IMR-90 (cell line): ENCODE measurements at regions of chr2 and their contacts with region 1.

Region 1: GRCh38 chr2:28751252-28751955 is at the start of gene PPP1CB:
- DNase-seq: peak; percentile 96
- ATAC-seq: peak; percentile 92
- H3K4me3 ChIP-seq: peak within 1 kb of the TSS; percentile 93
- H3K27ac ChIP-seq: peak within 1 kb of the TSS; percentile 99
- H3K4me1 ChIP-seq: peaks cover 9% of the 10 kb centered on the region
- H3K27me3 ChIP-seq: no peaks in the 10 kb centered on the region
- CTCF ChIP-seq: peak; percentile 38
- POLR2A ChIP-seq: peak; percentile 72; the same call in 1 of the 2 replicates
- RAD21 ChIP-seq: peak; percentile 14; the same call in 1 of the 2 replicates
- total RNA-seq, gene PPP1CB: 111 and 271 TPM in 2 replicates

Region 2: DNA sequence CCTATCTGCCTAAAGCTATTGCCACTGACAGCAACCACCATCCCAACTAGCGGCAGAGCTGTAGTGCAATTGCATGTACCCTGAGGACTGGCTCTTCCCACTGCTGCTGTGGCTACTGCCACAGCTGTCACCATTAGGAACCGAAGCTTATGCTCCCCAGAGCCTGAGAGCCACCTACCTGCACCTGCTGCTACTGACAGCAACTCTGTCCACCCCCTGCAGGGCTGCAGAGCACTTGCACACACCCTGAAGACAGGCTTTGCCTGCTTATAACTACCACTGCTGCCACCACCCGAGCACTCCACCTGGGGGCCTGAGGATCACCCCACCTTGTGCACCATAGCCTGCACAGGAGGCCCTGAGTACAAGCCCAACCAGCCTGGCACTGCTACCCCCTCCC is 576.4 kb before region 1 on chr2:
- CTCF ChIA-PET with region 1: no interaction called
- POLR2A ChIA-PET with region 1: no interaction called
- dilution Hi-C with region 1: no loop called
- in situ Hi-C with region 1: no loop called
- intact Hi-C with region 1: no loop called
- DNase-seq: no peak
- ATAC-seq: no peak
- H3K4me3 ChIP-seq: no peak overlapping the region
- H3K27ac ChIP-seq: no peak overlapping the region
- H3K4me1 ChIP-seq: peaks cover 6% of the 10 kb centered on the region
- H3K27me3 ChIP-seq: no peaks in the 10 kb centered on the region
- CTCF ChIP-seq: no peak
- POLR2A ChIP-seq: no peak
- RAD21 ChIP-seq: no peak

Region 3: GRCh38 chr2:28566521-28567041 is 184.8 kb before region 1 on chr2:
- CTCF ChIA-PET with region 1: interaction called, 8 read pairs
- POLR2A ChIA-PET with region 1: no interaction called
- dilution Hi-C with region 1: no loop called
- in situ Hi-C with region 1: no loop called
- intact Hi-C with region 1: loop called (anchors 1 kb)
- DNase-seq: peak; percentile 72
- ATAC-seq: peak; percentile 98
- H3K4me3 ChIP-seq: peak overlapping the region; percentile 65
- H3K27ac ChIP-seq: peak overlapping the region; percentile 67
- H3K4me1 ChIP-seq: 0 out of 2 replicates have a peak, but pooled peaks cover 2% of the 10 kb centered on the region
- H3K27me3 ChIP-seq: no peaks in the 10 kb centered on the region
- CTCF ChIP-seq: peak; percentile 100
- POLR2A ChIP-seq: peak; percentile 54
- RAD21 ChIP-seq: peak; percentile 97

Region 4: DNA sequence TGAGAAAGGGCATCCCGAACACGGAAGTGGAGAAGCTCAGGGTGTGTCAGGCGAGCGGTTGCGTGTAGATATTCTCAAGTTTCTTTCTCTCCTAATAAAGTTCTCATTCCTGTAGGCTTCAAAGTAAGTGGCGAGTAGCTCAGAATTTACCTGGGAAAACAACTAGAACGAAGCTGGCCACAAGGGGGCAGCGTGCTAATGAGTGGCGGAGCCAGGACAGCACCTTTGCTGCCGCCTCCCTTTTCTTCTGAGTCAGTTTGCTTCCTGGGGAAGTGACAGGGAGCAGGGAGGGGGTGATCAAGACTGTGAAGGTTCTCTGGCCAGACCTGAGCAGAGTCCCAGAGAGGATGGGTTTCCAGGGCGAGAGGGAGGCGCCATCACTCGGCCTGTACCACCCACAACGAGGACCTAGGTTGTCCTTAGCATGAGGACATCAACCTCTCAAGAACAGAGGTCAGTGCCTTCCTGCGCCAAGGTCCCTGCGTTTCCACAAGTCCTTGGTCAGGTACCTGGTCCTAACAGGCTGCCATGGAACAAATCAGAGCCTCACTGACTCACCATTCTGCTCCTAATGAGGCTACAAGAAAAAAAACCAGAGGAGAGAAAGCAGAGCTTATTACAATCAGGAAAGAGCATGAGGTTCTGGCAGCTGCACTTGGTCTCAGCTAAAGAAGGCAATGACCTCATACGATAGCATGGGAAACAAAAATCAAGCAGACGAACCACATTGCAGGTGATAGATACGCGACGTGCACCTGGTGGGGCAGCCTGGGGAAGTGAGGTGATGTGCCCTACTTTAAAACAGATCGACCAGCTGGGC is 156.9 kb before region 1 on chr2:
- CTCF ChIA-PET with region 1: interaction called, 5 read pairs
- POLR2A ChIA-PET with region 1: no interaction called
- dilution Hi-C with region 1: no loop called
- in situ Hi-C with region 1: loop called (anchors 5 kb)
- intact Hi-C with region 1: loop called (anchors 1 kb)
- DNase-seq: peak; percentile 82
- ATAC-seq: peak; percentile 83
- H3K4me3 ChIP-seq: no peak overlapping the region
- H3K27ac ChIP-seq: peak overlapping the region; percentile 5; the same call in 1 of the 2 replicates
- H3K4me1 ChIP-seq: peaks cover 5% of the 10 kb centered on the region
- H3K27me3 ChIP-seq: no peaks in the 10 kb centered on the region
- CTCF ChIP-seq: peak; percentile 83
- POLR2A ChIP-seq: no peak
- RAD21 ChIP-seq: peak; percentile 88

Region 5: GRCh38 chr2:28681158-28681571 is 70.2 kb before region 1 on chr2:
- CTCF ChIA-PET with region 1: no interaction called
- POLR2A ChIA-PET with region 1: no interaction called
- dilution Hi-C with region 1: no loop called
- in situ Hi-C with region 1: no loop called
- intact Hi-C with region 1: loop called (anchors 5 kb)
- DNase-seq: peak; percentile 81
- ATAC-seq: peak; percentile 48
- H3K4me3 ChIP-seq: no peak overlapping the region
- H3K27ac ChIP-seq: 0 out of 2 replicates have a peak overlapping the region, but pooled peaks have one; percentile 25
- H3K4me1 ChIP-seq: peaks cover 28% of the 10 kb centered on the region
- H3K27me3 ChIP-seq: no peaks in the 10 kb centered on the region
- CTCF ChIP-seq: no peak
- POLR2A ChIP-seq: no peak
- RAD21 ChIP-seq: no peak

Region 6: DNA sequence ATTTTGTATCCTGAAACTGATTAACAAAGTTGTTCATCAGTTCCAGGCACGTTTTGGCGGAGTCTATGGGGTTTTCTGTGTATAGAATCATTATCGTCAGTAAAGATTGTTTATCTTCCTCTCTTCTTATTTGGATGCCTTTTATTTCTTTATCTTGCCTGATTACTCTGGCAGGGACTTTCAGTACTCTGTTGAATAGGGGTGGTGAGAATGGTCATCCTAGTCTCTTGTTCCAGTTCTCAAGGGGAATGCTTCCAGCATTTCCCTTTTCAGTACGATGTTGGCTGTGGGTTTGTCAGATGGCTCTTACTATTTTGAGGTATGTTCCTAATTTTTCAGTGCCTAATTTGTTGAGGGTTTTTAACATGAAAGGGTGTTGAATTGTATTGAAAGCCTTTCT is 45.2 kb after region 1 on chr2:
- CTCF ChIA-PET with region 1: no interaction called
- POLR2A ChIA-PET with region 1: no interaction called
- dilution Hi-C with region 1: no loop called
- in situ Hi-C with region 1: no loop called
- intact Hi-C with region 1: loop called (anchors 5 kb)
- DNase-seq: no peak
- ATAC-seq: no peak
- H3K4me3 ChIP-seq: no peak overlapping the region
- H3K27ac ChIP-seq: no peak overlapping the region
- H3K4me1 ChIP-seq: no peaks in the 10 kb centered on the region
- H3K27me3 ChIP-seq: no peaks in the 10 kb centered on the region
- CTCF ChIP-seq: no peak
- POLR2A ChIP-seq: no peak
- RAD21 ChIP-seq: no peak